ENCODE measurements at regions of chr17 and their contacts with region 1.

Region 1: GRCh38 chr17:1606352-1607033 is 22.1 kb downstream of the SLC43A2 start:
- DNase-seq: peak; percentile 67
- ATAC-seq: no peak
- H3K4me3 Mint-ChIP-seq: peak overlapping the region; percentile 21
- H3K27ac Mint-ChIP-seq: peak overlapping the region; percentile 85
- H3K4me1 Mint-ChIP-seq: peaks cover 25% of the 10 kb centered on the region
- H3K27me3 Mint-ChIP-seq: no peaks in the 10 kb centered on the region

Region 2: GRCh38 chr17:1561400-1562175 is 44.9 kb before region 1 on chr17:
- CTCF ChIA-PET with region 1: interaction called, 3 read pairs
- POLR2A ChIA-PET with region 1: interaction called, 3 read pairs
- intact Hi-C with region 1: loop called (anchors 1 to 5 kb)
- DNase-seq: peak; percentile 64
- ATAC-seq: peak; percentile 35
- H3K4me3 Mint-ChIP-seq: peak overlapping the region; percentile 81
- H3K27ac Mint-ChIP-seq: no peak overlapping the region
- H3K4me1 Mint-ChIP-seq: peaks cover 27% of the 10 kb centered on the region
- H3K27me3 Mint-ChIP-seq: no peaks in the 10 kb centered on the region

Region 3: GRCh38 chr17:1566545-1567199 is 39.8 kb before region 1 on chr17:
- CTCF ChIA-PET with region 1: interaction called, 3 read pairs
- POLR2A ChIA-PET with region 1: no interaction called
- intact Hi-C with region 1: loop called (anchors 1 to 5 kb)
- DNase-seq: peak; percentile 66
- ATAC-seq: peak; percentile 86
- H3K4me3 Mint-ChIP-seq: peak overlapping the region; percentile 56
- H3K27ac Mint-ChIP-seq: peak overlapping the region; percentile 90
- H3K4me1 Mint-ChIP-seq: peaks cover 22% of the 10 kb centered on the region
- H3K27me3 Mint-ChIP-seq: no peaks in the 10 kb centered on the region

Region 4: DNA sequence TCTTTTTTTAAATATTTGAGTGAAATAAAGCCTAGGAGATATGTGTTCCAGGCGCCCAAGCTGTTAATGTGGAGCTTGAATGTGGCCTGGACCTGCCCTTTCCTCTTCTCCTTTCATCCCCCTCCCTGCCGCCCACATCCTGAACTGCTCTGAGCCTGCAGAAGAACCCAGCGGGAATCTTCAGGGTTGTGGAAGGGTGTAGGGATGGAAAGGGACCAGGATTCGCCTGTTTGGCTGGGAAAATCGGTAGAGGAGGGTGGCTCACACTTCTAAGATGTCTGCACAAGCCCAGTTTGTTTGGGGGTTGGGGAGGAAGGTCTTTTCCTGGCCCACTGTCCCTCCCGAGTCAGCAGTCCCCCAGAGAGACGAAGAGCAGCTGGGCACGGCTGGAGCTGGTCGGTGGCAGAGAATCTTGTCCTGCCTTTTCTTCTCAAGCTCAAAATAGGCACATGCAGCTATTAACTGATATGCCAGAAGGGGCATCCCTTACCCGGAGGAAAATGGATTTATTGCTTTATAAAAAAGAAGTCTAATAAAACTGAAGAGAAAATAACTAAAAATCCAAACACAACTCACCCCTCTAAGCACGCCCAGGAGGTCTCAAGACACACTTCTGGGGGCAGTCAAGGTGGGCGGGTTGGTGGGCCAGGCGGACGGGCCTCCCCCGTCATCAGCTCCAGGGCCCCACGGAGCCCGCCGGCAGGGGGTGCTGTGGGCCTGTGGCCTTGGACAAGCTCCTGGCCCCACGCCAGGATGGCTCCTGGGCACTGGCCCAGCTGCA is 32.4 kb before region 1 on chr17:
- CTCF ChIA-PET with region 1: interaction called, 11 read pairs
- POLR2A ChIA-PET with region 1: no interaction called
- intact Hi-C with region 1: loop called in 1 of 2 experiments (anchors 5 kb)
- DNase-seq: peak; percentile 86
- ATAC-seq: peak; percentile 71
- H3K4me3 Mint-ChIP-seq: no peak overlapping the region
- H3K27ac Mint-ChIP-seq: no peak overlapping the region
- H3K4me1 Mint-ChIP-seq: peaks cover 3% of the 10 kb centered on the region
- H3K27me3 Mint-ChIP-seq: no peaks in the 10 kb centered on the region

Region 5: DNA sequence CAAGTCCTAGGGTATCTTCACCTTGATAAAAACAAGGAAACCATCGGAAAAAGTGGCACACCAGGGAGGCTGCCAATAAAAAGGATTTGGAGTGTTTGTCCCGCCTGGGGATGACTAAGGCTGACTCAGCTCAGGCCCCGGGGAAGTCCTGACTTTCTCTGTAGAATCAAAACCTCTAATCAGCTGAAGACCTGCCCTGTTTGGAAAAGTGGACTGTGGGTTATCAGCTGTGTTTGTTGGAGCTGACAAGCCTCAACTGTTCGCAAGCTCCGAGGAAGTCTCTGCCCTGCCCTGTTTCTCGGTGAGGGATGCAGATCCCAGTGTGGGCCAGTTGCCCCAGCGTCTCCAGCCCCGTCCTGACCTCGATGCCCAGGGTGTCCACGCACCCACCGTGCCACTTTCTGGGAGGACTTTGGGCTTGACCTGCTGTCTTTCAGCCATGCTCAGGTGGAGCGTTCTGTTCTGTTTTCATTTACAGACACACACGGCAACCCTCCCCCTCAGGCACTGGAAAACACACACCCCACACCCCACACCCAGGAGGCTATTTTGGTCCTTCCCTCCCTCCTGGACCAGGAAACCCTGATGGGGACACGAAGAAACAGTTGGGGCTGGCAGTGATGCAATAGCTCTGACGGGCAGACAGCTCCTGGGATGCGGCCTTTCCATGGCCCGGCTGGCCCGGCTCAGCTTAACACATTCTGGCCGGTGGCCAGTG is 16.3 kb before region 1 on chr17:
- CTCF ChIA-PET with region 1: no interaction called
- POLR2A ChIA-PET with region 1: no interaction called
- intact Hi-C with region 1: no loop called
- DNase-seq: peak; percentile 60
- ATAC-seq: peak; percentile 77
- H3K4me3 Mint-ChIP-seq: no peak overlapping the region
- H3K27ac Mint-ChIP-seq: no peak overlapping the region
- H3K4me1 Mint-ChIP-seq: peaks cover 11% of the 10 kb centered on the region
- H3K27me3 Mint-ChIP-seq: no peaks in the 10 kb centered on the region

Measured in activated CD4-positive, alpha-beta T cell treated with anti-CD3 and anti-CD28 coated beads for 36 hours (primary cell).